ENCODE measurements at regions of chr4 and their contacts with region 1.

Region 1: GRCh38 chr4:118981839-118982381 is 93.3 kb downstream of the SYNPO2 start:
- DNase-seq: peak in 4 of 5 donors; percentile 59 to 74 (median 67)
- ATAC-seq: peak; percentile 69 to 81 (median 77)
- H3K4me3 ChIP-seq: peak overlapping the region in 1 of 12 donors; percentile 6
- H3K27ac ChIP-seq: peak overlapping the region in 9 of 12 donors; percentile 18 to 87 (median 59)
- H3K4me1 ChIP-seq: peaks cover 3 to 86% (median 48%) of the 10 kb centered on the region in 12 donors
- H3K27me3 ChIP-seq: no peaks in the 10 kb centered on the region
- CTCF ChIP-seq: peak; percentile 58 to 83 (median 74)
- POLR2A ChIP-seq: no peak

Region 2: GRCh38 chr4:119034276-119035008 is 52.5 kb after region 1 on chr4:
- intact Hi-C with region 1: loop called in 6 of 10 experiments (anchors 5 kb)
- DNase-seq: no peak
- ATAC-seq: peak in 1 of 4 donors; percentile 9
- H3K4me3 ChIP-seq: no peak overlapping the region
- H3K27ac ChIP-seq: peak overlapping the region in 9 of 12 donors; percentile 16 to 91 (median 50)
- H3K4me1 ChIP-seq: peaks cover 0 to 59% (median 34%) of the 10 kb centered on the region in 12 donors
- H3K27me3 ChIP-seq: no peaks in the 10 kb centered on the region
- CTCF ChIP-seq: no peak
- POLR2A ChIP-seq: no peak

Region 3: DNA sequence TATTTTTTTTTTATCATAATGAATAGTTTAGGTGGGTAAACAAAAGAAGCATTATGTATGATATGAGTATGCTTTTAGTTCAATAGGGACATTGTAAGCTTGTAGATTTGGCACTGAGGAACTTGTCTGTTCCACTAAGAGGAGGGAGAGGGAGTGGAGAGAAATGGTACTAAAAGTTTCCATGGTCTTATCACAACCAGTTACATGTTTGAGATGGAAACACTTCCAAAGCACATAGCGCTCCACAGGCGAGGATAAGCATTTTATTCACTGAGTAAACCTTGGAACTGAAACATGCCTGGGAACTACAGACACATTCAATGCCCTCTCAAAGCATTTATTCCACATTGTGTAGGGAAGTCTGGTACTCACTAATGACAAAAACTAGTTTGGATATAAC is 169.3 kb after region 1 on chr4:
- intact Hi-C with region 1: loop called in 2 of 10 experiments (anchors 5 kb)
- DNase-seq: peak in 2 of 5 donors; percentile 27 to 34
- ATAC-seq: peak; percentile 86 to 97 (median 90)
- H3K4me3 ChIP-seq: no peak overlapping the region
- H3K27ac ChIP-seq: peak overlapping the region; percentile 32 to 88 (median 71)
- H3K4me1 ChIP-seq: peaks cover 0 to 69% (median 16%) of the 10 kb centered on the region in 12 donors
- H3K27me3 ChIP-seq: no peaks in the 10 kb centered on the region
- CTCF ChIP-seq: peak in 2 of 12 donors; percentile 18 to 25
- POLR2A ChIP-seq: peak in 1 of 2 donors; percentile 20

Region 4: DNA sequence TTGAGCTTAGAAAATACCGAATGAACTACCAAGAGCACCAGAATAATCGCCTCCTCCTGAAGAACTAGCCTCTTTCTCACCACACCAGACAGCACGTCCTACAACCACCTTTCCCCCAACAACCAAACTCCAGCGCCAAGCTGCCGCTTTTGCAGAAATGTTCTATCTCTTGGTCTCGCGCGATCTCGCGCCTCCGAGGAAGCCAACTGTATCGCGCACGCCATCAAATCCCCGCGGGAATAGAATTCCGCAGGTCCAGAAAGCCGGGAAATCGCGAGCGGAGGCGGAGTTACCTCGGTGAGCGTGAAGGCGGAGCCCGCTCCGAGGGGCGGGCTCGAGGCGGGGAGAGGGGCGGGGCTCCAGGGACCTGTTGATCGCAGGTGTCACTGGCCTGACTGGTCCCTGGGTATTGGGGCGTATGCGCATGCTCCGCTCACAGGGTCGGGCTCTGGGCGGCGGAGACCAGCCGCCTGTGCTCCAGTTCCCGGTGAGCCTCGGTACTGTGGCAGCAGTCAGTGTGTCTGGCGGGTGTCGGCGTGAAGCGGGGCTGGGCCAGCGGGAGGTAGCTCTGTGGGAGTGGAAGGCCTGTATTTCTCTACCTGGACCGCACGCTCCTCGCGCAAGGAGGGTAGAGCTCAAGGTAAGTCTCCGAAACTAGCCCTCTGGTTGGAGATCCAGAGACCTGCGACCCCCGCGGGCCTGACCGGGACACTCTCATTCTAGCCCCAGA is 230.5 kb after region 1 on chr4 and contains the start of gene USP53:
- intact Hi-C with region 1: loop called in 3 of 10 experiments (anchors 5 to 10 kb)
- DNase-seq: peak; percentile 95 to 98 (median 97)
- ATAC-seq: peak; percentile 96 to 98 (median 98)
- H3K4me3 ChIP-seq: peak within 1 kb of the TSS; percentile 50 to 93 (median 83)
- H3K27ac ChIP-seq: peak within 1 kb of the TSS; percentile 88 to 99 (median 96)
- H3K4me1 ChIP-seq: peaks cover 0 to 46% (median 15%) of the 10 kb centered on the region in 12 donors
- H3K27me3 ChIP-seq: no peaks in the 10 kb centered on the region
- CTCF ChIP-seq: no peak
- POLR2A ChIP-seq: peak in 1 of 2 donors; percentile 92
- total RNA-seq, gene USP53: 32.9 to 52.9 (median 43.7) TPM

Region 5: GRCh38 chr4:119268451-119268850 is 286.5 kb after region 1 on chr4:
- intact Hi-C with region 1: no loop called
- DNase-seq: no peak
- ATAC-seq: no peak
- H3K4me3 ChIP-seq: no peak overlapping the region
- H3K27ac ChIP-seq: no peak overlapping the region
- H3K4me1 ChIP-seq: peaks cover 0 to 8% (median 0%) of the 10 kb centered on the region in 12 donors
- H3K27me3 ChIP-seq: no peaks in the 10 kb centered on the region
- CTCF ChIP-seq: no peak
- POLR2A ChIP-seq: no peak

Measured in heart left ventricle (tissue), 16 donors.